ENCODE measurements at regions of chr21 and their contacts with region 1.

Region 1: DNA sequence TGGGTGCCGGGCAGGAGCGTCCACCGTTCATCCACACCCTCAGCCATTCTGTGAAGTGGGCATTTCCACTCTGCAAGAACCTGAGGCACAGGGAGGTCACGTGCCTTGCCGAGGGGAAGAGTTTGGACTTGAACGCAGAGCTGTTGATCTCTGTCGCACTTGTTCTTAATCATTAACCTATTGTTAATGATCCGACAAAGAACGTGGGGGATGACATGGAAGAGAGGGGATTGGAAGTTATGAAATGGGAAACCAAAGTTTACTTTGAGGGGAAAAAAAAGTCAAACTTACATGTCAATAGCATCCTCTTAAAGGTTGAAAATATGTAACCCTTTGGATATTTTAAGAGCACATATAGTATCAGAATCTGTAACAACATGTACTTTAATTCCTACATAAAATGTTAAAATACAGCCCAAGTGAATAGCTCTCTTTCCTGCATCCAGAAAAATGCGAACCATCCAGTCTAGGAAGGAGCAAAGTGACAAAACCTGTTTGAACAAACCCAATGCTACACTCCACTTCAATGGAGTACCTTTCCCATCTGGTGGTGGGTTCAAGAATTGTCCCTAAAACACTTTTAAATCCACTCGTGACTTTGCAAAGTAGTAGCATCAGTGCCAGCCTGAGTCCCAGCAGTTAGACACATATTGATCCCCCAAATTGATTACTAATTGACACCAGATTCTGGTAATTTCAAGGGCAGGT is 75.5 kb downstream of the SETD4 start:
- DNase-seq: peak; percentile 48 to 74
- H3K4me3 ChIP-seq: 0 out of 2 replicates have a peak overlapping the region, but pooled peaks have one; percentile 2
- H3K4me3 Mint-ChIP-seq: peak overlapping the region; percentile 57
- H3K27ac Mint-ChIP-seq: peak overlapping the region; percentile 50
- H3K4me1 ChIP-seq: peaks cover 40% of the 10 kb centered on the region
- H3K4me1 Mint-ChIP-seq: peaks cover 27% of the 10 kb centered on the region
- H3K27me3 ChIP-seq: no peaks in the 10 kb centered on the region
- H3K27me3 Mint-ChIP-seq: no peaks in the 10 kb centered on the region
- CTCF ChIP-seq: peak; percentile 44 to 70

Region 2: DNA sequence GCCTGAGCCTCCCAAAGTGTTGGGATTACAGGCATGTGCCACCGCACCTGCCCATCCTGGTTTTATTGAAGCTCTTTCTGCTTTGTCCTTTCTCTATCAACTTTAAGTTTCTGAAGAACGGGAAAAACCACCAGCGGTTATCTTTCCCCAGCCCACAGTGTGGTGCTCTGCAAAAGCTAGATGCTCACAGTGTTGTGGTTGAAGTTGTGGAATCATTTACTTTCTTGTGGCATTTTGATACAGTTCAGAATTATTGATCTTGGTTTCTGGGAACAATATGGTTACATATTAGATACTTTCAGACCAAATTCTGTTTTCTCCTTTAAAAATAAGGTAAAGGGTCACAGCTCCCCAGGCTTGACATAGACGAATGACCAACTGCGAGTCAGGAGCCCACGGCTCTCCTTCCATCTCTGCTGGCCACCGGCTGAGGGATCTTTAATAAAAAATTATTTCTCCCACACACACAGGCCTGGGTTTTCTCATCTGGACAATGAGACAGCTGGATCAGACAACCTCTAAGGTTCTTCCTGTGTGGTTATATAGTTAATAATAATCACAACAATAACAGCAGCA is 309.8 kb before region 1 on chr21:
- CTCF ChIA-PET with region 1: no interaction called
- POLR2A ChIA-PET with region 1: no interaction called
- intact Hi-C with region 1: no loop called
- DNase-seq: no peak
- H3K4me3 ChIP-seq: no peak overlapping the region
- H3K4me3 Mint-ChIP-seq: no peak overlapping the region
- H3K27ac Mint-ChIP-seq: no peak overlapping the region
- H3K4me1 ChIP-seq: no peaks in the 10 kb centered on the region
- H3K4me1 Mint-ChIP-seq: no peaks in the 10 kb centered on the region
- H3K27me3 ChIP-seq: no peaks in the 10 kb centered on the region
- H3K27me3 Mint-ChIP-seq: peaks cover 6% of the 10 kb centered on the region
- CTCF ChIP-seq: no peak

Region 3: GRCh38 chr21:35840197-35840799 is 144.5 kb before region 1 on chr21:
- CTCF ChIA-PET with region 1: interaction called, 7 read pairs
- POLR2A ChIA-PET with region 1: no interaction called
- intact Hi-C with region 1: loop called (anchors 1 kb)
- DNase-seq: peak; percentile 52 to 54
- H3K4me3 ChIP-seq: no peak overlapping the region
- H3K4me3 Mint-ChIP-seq: no peak overlapping the region
- H3K27ac Mint-ChIP-seq: no peak overlapping the region
- H3K4me1 ChIP-seq: 0 out of 2 replicates have a peak, but pooled peaks cover 4% of the 10 kb centered on the region
- H3K4me1 Mint-ChIP-seq: no peaks in the 10 kb centered on the region
- H3K27me3 ChIP-seq: no peaks in the 10 kb centered on the region
- H3K27me3 Mint-ChIP-seq: no peaks in the 10 kb centered on the region
- CTCF ChIP-seq: peak; percentile 63 to 84

Region 4: GRCh38 chr21:35882791-35883240 is 102.0 kb before region 1 on chr21:
- CTCF ChIA-PET with region 1: no interaction called
- POLR2A ChIA-PET with region 1: no interaction called
- intact Hi-C with region 1: loop called (anchors 1 kb)
- DNase-seq: no peak
- H3K4me3 ChIP-seq: no peak overlapping the region
- H3K4me3 Mint-ChIP-seq: no peak overlapping the region
- H3K27ac Mint-ChIP-seq: no peak overlapping the region
- H3K4me1 ChIP-seq: no peaks in the 10 kb centered on the region
- H3K4me1 Mint-ChIP-seq: peaks cover 7% of the 10 kb centered on the region
- H3K27me3 ChIP-seq: no peaks in the 10 kb centered on the region
- H3K27me3 Mint-ChIP-seq: no peaks in the 10 kb centered on the region
- CTCF ChIP-seq: no peak

Region 5: DNA sequence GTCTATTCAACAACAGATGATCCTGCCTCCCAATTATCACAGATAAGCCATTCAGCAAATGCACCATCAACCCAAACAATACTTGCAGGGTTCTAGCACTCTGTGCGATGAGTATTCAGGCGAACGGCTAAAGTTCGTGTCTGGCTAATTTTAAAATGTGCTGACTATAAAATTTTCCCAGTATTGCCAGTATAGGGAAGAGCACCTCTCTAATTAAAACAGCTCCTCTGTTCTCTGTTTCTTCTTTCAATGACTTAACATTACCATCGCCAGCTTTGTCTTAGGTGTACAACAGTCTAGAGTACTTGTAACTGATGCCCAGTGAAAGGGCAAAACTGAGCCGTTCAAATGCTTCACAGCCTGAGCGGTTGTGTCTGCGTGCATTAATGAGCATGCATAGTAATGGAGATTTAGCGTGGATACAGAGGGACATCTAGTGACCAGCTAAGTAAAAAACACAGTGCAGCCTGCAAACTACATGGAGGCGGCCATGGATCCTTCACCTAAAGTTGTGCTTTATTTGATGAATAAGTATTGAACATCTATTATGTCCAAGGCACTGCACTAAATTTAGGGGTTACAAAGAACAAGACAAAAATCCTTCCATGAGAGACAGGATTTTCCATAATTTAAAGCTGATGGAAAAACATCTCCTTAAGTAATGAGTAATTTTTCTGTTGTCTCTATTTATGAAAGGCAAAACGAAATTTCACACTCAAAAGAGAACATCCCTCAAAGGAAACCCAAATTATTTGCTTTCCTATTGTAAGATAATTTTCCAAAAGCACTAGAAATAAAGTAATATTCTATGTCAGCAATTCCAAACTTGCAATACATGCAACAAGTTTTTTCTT is 44.5 kb before region 1 on chr21:
- CTCF ChIA-PET with region 1: interaction called, 3 read pairs
- POLR2A ChIA-PET with region 1: no interaction called
- intact Hi-C with region 1: loop called (anchors 1 kb)
- DNase-seq: peak; percentile 43 to 60
- H3K4me3 ChIP-seq: no peak overlapping the region
- H3K4me3 Mint-ChIP-seq: peak overlapping the region; percentile 40
- H3K27ac Mint-ChIP-seq: no peak overlapping the region
- H3K4me1 ChIP-seq: peaks cover 4% of the 10 kb centered on the region; the same call in 1 of the 2 replicates
- H3K4me1 Mint-ChIP-seq: no peaks in the 10 kb centered on the region
- H3K27me3 ChIP-seq: no peaks in the 10 kb centered on the region
- H3K27me3 Mint-ChIP-seq: no peaks in the 10 kb centered on the region
- CTCF ChIP-seq: peak; percentile 36 to 66

Region 6: GRCh38 chr21:35953615-35954014 is 31.2 kb before region 1 on chr21:
- CTCF ChIA-PET with region 1: interaction called, 15 read pairs
- POLR2A ChIA-PET with region 1: interaction called, 4 read pairs
- intact Hi-C with region 1: loop called (anchors 1 kb)
- DNase-seq: peak; percentile 83 to 85
- H3K4me3 ChIP-seq: no peak overlapping the region
- H3K4me3 Mint-ChIP-seq: no peak overlapping the region
- H3K27ac Mint-ChIP-seq: peak overlapping the region; percentile 91
- H3K4me1 ChIP-seq: peaks cover 72% of the 10 kb centered on the region
- H3K4me1 Mint-ChIP-seq: peaks cover 26% of the 10 kb centered on the region
- H3K27me3 ChIP-seq: no peaks in the 10 kb centered on the region
- H3K27me3 Mint-ChIP-seq: no peaks in the 10 kb centered on the region
- CTCF ChIP-seq: no peak

Region 7: DNA sequence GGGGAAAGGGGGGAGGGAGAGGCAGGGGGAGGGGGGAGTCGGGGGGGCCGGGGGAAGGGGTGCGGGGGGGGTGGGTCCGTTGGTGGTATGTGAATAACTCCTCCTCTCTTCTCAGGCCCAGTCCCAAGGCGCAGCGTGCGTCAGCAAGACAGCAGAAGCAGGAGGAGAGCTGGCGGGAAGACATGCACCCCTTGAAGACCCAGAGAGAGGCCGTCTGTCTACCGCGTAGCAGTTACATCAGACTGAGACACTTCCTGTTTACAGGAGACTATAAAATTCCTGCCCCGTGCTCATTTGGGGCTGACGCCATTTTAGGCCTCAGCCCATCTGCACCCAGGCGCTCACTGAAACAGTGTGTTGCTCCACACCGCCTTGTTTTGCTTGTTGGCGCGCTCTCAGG is 20.2 kb after region 1 on chr21:
- CTCF ChIA-PET with region 1: no interaction called
- POLR2A ChIA-PET with region 1: no interaction called
- intact Hi-C with region 1: no loop called
- DNase-seq: no peak
- H3K4me3 ChIP-seq: no peak overlapping the region
- H3K4me3 Mint-ChIP-seq: no peak overlapping the region
- H3K27ac Mint-ChIP-seq: no peak overlapping the region
- H3K4me1 ChIP-seq: no peaks in the 10 kb centered on the region
- H3K4me1 Mint-ChIP-seq: no peaks in the 10 kb centered on the region
- H3K27me3 ChIP-seq: no peaks in the 10 kb centered on the region
- H3K27me3 Mint-ChIP-seq: no peaks in the 10 kb centered on the region
- CTCF ChIP-seq: no peak

Measured in Caco-2 (cell line).